ENCODE measurements at regions of chr19 and their contacts with region 1.

Region 1: GRCh38 chr19:45405435-45406225 is 761 bp upstream of the PPP1R13L start:
- DNase-seq: peak; percentile 89
- H3K4me3 Mint-ChIP-seq: peak overlapping the region; percentile 94
- H3K27ac Mint-ChIP-seq: peak overlapping the region; percentile 84
- H3K4me1 Mint-ChIP-seq: peaks cover 39% of the 10 kb centered on the region
- H3K27me3 Mint-ChIP-seq: peaks cover 26% of the 10 kb centered on the region

Region 2: GRCh38 chr19:45370410-45371204 is 35.0 kb before region 1 on chr19 and contains the start of gene ERCC2:
- CTCF ChIA-PET with region 1: interaction called, 5 read pairs
- POLR2A ChIA-PET with region 1: interaction called, 3 read pairs
- intact Hi-C with region 1: loop called (anchors 1 kb)
- DNase-seq: peak; percentile 100
- H3K4me3 Mint-ChIP-seq: peak within 1 kb of the TSS; percentile 85
- H3K27ac Mint-ChIP-seq: peak within 1 kb of the TSS; percentile 96
- H3K4me1 Mint-ChIP-seq: peaks cover 8% of the 10 kb centered on the region
- H3K27me3 Mint-ChIP-seq: peaks cover 2% of the 10 kb centered on the region
- total RNA-seq, gene ERCC2: 27.2 to 27.4 TPM

Region 3: GRCh38 chr19:45423589-45424190 is 18.1 kb after region 1 on chr19 and contains the start of gene ERCC1:
- CTCF ChIA-PET with region 1: interaction called, 5 read pairs
- POLR2A ChIA-PET with region 1: interaction called, 4 read pairs
- intact Hi-C with region 1: loop called (anchors 1 kb)
- DNase-seq: peak; percentile 92
- H3K4me3 Mint-ChIP-seq: peak within 1 kb of the TSS; percentile 85
- H3K27ac Mint-ChIP-seq: peak within 1 kb of the TSS; percentile 88
- H3K4me1 Mint-ChIP-seq: peaks cover 54% of the 10 kb centered on the region
- H3K27me3 Mint-ChIP-seq: peaks cover 2% of the 10 kb centered on the region
- total RNA-seq, gene ERCC1: 59.4 to 59.7 TPM

Region 4: DNA sequence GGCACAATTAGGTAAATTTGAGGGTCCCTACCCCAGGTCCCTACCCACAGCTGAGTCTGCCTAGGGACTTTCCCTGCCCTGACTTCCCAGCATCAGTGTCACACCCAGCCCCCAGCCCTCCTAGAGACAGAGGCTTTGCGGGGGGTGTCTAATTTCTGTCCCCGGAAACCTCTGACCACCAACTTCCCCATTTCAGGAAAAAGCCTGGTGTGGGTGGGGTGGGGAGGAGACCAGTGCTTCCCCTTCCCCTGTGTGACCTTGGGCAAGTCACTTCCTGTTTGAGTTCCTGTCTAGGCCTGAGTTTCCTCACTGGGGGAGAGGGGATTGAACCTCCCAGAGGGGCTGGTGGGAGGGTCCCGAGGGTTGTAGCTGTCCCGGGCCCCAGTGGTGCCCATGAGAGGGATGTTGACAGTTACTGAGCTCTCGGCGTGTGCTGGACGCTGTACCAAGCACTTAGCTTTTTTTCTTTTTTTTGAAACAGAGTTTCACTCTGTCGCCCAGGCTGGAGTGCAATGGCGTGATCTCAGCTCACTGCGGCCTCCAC is 109.5 kb after region 1 on chr19:
- CTCF ChIA-PET with region 1: no interaction called
- POLR2A ChIA-PET with region 1: no interaction called
- intact Hi-C with region 1: no loop called
- DNase-seq: peak; percentile 54
- H3K4me3 Mint-ChIP-seq: peak overlapping the region; percentile 1
- H3K27ac Mint-ChIP-seq: peak overlapping the region; percentile 87
- H3K4me1 Mint-ChIP-seq: peaks cover 59% of the 10 kb centered on the region
- H3K27me3 Mint-ChIP-seq: no peaks in the 10 kb centered on the region

Measured in activated CD4-positive, alpha-beta memory T cell treated with anti-CD3 and anti-CD28 coated beads for 36 hours (primary cell).